HAP-1 (cell line): ENCODE measurements at regions of chr12 and their contacts with region 1.

Region 1: GRCh38 chr12:5083955-5084849 is 40.5 kb downstream of the KCNA5 start:
- DNase-seq: peak; percentile 28 to 49
- H3K4me3 ChIP-seq: no peak overlapping the region
- H3K4me1 ChIP-seq: no peaks in the 10 kb centered on the region
- H3K27me3 ChIP-seq: peaks cover 6% of the 10 kb centered on the region; the same call in 1 of the 2 replicates

Region 2: GRCh38 chr12:4857472-4858291 is 226.5 kb before region 1 on chr12:
- in situ Hi-C with region 1: loop called (anchors 10 kb)
- DNase-seq: peak; percentile 58 to 85
- H3K4me3 ChIP-seq: no peak overlapping the region
- H3K4me1 ChIP-seq: peaks cover 3% of the 10 kb centered on the region
- H3K27me3 ChIP-seq: peaks cover 19% of the 10 kb centered on the region

Region 3: GRCh38 chr12:5022465-5023061 is 61.6 kb before region 1 on chr12:
- in situ Hi-C with region 1: loop called (anchors 5 kb)
- DNase-seq: peak; percentile 36 to 41
- H3K4me3 ChIP-seq: no peak overlapping the region
- H3K4me1 ChIP-seq: no peaks in the 10 kb centered on the region
- H3K27me3 ChIP-seq: peaks cover 2% of the 10 kb centered on the region; the same call in 1 of the 2 replicates